CD8-positive, alpha-beta T cell (primary cell): ENCODE measurements at regions of chr4 and their contacts with region 1.

Region 1: DNA sequence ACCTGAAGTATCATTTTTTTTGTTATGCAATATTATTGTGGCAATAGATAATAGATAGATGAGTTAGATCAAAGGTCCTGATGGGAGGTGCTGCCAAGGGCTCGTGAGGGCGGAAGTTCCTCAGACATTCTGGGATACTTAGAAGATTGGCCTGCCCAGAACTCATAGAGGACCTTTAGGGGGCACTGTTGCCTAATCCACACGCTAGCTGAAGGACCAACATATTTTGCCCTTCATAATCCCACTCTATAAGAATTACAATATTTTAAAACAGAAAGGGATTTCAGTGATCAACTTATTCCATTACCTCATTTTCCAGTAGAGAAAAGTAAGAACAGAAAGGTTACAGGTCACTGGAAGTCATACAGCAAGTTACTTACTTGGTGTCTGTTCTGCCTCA is 22.9 kb upstream of the COX7B2 start:
- DNase-seq: peak in 2 of 9 experiments; percentile 1 to 16
- ATAC-seq: no peak
- H3K4me3 ChIP-seq: no peak overlapping the region
- H3K4me3 Mint-ChIP-seq: no peak overlapping the region
- H3K27ac ChIP-seq: no peak overlapping the region
- H3K27ac Mint-ChIP-seq: no peak overlapping the region
- H3K4me1 ChIP-seq: no peaks in the 10 kb centered on the region
- H3K4me1 Mint-ChIP-seq: no peaks in the 10 kb centered on the region
- H3K27me3 ChIP-seq: no peaks in the 10 kb centered on the region
- H3K27me3 Mint-ChIP-seq: peaks cover 4% of the 10 kb centered on the region
- CTCF ChIP-seq: no peak

Region 2: GRCh38 chr4:46856333-46856732 is 75.6 kb before region 1 on chr4:
- CTCF ChIA-PET with region 1: no interaction called
- POLR2A ChIA-PET with region 1: no interaction called
- intact Hi-C with region 1: no loop called
- DNase-seq: no peak
- ATAC-seq: no peak
- H3K4me3 ChIP-seq: no peak overlapping the region
- H3K4me3 Mint-ChIP-seq: no peak overlapping the region
- H3K27ac ChIP-seq: no peak overlapping the region
- H3K27ac Mint-ChIP-seq: no peak overlapping the region
- H3K4me1 ChIP-seq: no peaks in the 10 kb centered on the region
- H3K4me1 Mint-ChIP-seq: no peaks in the 10 kb centered on the region
- H3K27me3 ChIP-seq: no peaks in the 10 kb centered on the region
- H3K27me3 Mint-ChIP-seq: peaks cover 2% of the 10 kb centered on the region
- CTCF ChIP-seq: no peak

Region 3: DNA sequence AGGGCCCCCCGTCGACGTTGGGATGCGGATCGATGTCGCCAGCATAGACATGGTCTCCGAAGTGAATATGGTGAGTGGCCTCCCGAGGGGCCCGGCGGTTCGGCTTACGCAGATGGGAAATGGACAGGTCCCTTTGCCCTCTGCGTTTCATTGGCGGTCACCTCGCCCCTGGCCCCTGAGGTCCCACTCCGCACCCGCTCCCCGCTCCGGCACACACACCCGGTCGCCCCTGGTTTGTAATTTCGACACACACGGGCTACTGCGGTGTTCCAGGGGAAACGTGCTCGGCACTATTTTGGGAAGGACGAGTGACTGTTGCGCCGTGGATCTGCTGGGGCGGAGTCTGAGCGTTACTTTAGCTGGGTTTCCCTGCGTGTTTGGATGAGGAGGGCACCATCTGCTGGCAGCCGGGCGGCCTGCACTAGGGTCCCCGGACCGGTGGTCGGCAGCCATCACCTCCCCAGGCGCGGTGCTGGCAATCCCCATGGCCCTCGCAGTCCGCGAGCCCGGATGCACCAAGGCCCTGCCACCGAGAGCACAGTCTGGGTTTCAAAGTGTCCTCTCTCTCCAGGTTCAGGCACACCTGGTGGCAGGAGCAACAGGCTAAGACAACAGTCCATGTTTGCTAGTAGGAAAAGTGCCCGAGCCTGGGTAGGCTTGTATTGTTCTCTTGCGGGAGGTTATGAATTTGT is 100.6 kb after region 1 on chr4:
- CTCF ChIA-PET with region 1: no interaction called
- POLR2A ChIA-PET with region 1: no interaction called
- intact Hi-C with region 1: loop called in 1 of 2 experiments (anchors 5 kb)
- DNase-seq: peak in 5 of 9 experiments; percentile 22 to 56 (median 44)
- ATAC-seq: peak; percentile 74
- H3K4me3 ChIP-seq: peak overlapping the region; percentile 29 to 38
- H3K4me3 Mint-ChIP-seq: peak overlapping the region; percentile 65
- H3K27ac ChIP-seq: no peak overlapping the region
- H3K27ac Mint-ChIP-seq: no peak overlapping the region
- H3K4me1 ChIP-seq: peaks cover 13% of the 10 kb centered on the region
- H3K4me1 Mint-ChIP-seq: peaks cover 17% of the 10 kb centered on the region
- H3K27me3 ChIP-seq: peaks cover 13% of the 10 kb centered on the region in 2 experiments
- H3K27me3 Mint-ChIP-seq: peaks cover 43% of the 10 kb centered on the region
- CTCF ChIP-seq: peak; percentile 55